Endothelial cell of umbilical vein (primary cell): ENCODE measurements at regions of chr15 and their contacts with region 1.

Region 1: DNA sequence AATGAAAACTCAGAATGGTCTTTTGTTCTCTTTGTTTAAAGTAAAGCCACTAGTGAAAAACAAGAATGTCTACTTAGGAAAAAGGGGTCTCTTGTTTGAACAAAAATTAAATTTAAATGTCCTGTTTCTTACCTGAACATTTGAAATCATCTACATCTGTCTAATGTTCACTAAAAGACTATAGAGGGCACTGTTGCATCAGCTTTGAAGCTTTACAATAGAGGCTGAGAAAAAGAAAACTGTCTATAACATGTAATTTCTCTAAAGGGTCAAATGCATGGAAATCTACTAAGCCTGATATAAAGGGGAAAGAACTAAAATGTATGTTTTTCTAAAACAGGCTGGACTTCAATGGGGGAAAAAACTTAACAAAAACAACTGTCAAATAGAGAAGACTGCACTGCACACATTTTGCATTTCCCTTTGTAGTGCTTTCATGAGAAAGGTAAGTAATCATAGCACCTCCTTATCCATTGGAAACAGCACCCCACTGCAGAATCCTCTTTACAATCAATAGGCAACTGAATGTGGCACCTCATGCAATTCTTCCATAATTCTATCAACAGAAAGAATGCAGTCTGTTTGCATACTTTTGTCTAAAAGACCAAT is 26.3 kb downstream of the DPH6 start:
- DNase-seq: peak; percentile 77
- H3K4me3 ChIP-seq: no peak overlapping the region
- H3K27ac ChIP-seq: no peak overlapping the region
- H3K4me1 ChIP-seq: peaks cover 18% of the 10 kb centered on the region
- H3K27me3 ChIP-seq: no peaks in the 10 kb centered on the region
- CTCF ChIP-seq: peak; percentile 38 to 39
- POLR2A ChIP-seq: no peak

Region 2: GRCh38 chr15:35078221-35078915 is 441.3 kb before region 1 on chr15:
- CTCF ChIA-PET with region 1: interaction called, 10 read pairs
- POLR2A ChIA-PET with region 1: no interaction called
- dilution Hi-C with region 1: no loop called
- intact Hi-C with region 1: loop called (anchors 2 kb)
- DNase-seq: peak; percentile 54
- H3K4me3 ChIP-seq: no peak overlapping the region
- H3K27ac ChIP-seq: no peak overlapping the region
- H3K4me1 ChIP-seq: no peaks in the 10 kb centered on the region
- H3K27me3 ChIP-seq: peaks cover 3 to 4% of the 10 kb centered on the region in 2 experiments
- CTCF ChIP-seq: peak; percentile 72 to 73
- POLR2A ChIP-seq: no peak

Region 3: DNA sequence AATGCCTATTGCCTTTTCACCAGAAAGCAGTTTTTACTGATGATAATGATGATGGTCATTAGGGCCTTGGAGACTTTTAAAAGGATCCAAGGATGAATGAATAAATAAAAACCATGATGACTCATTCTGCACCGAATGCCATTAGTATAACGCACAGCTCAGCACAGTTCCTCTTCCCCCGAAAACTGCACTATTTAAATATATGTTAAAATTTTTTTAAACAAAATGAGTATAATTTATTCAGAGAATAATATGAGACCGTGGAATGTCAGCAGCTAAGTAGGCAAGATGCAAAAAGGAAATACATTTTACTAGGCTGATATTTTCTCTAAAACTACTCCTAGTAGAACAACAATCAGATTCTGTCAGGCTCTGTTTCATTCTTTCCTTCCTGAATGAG is 351.2 kb before region 1 on chr15:
- CTCF ChIA-PET with region 1: no interaction called
- POLR2A ChIA-PET with region 1: no interaction called
- dilution Hi-C with region 1: no loop called
- intact Hi-C with region 1: no loop called
- DNase-seq: peak; percentile 69
- H3K4me3 ChIP-seq: peak overlapping the region in 1 of 3 experiments; percentile 27
- H3K27ac ChIP-seq: peak overlapping the region; percentile 52
- H3K4me1 ChIP-seq: peaks cover 13% of the 10 kb centered on the region
- H3K27me3 ChIP-seq: no peaks in the 10 kb centered on the region
- CTCF ChIP-seq: no peak
- POLR2A ChIP-seq: no peak

Region 4: DNA sequence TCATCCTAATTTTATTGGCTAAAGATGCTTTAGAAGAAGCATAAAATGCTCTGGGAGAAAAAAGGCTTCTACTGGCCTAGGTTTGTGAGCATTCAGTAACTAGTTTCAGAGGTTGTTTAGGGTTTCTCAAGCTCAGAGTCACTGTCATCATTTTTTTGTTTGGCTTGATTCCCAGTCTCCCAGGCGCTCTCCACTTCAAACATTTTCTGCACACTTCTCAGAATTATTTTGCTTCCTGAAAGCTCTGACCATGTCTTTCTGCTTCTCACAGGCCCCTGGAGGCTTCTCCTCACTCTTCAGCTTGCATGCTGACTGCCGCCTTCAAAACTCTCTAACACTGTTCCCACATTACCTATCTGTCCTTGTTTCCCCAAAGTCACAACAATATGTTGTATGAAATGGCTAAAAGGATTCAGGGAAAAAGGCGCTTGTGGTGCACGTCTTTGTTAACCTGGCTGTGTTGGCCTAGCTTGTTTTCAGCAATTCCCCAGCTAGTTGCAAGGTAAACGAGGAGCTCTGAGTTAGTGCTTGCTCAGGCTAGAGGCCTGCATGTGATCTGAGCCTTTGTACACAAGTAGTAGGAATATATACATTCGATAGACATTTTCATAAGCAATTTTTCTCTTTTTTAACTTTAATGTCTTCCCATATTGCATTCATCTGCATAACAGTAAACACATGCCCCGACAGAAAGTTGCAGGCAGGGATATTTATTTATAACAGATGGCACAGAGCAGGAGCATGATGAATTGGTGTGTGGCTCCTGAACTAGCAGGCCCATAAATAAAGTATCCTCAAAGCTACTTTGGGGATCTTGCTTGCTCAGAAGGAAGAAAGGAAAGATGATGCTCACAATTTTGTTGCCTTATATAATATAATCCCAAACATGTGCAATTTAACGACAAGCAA is 155.5 kb after region 1 on chr15:
- CTCF ChIA-PET with region 1: interaction called, 3 read pairs
- POLR2A ChIA-PET with region 1: no interaction called
- dilution Hi-C with region 1: no loop called
- intact Hi-C with region 1: loop called (anchors 1 kb)
- DNase-seq: peak; percentile 62
- H3K4me3 ChIP-seq: no peak overlapping the region
- H3K27ac ChIP-seq: no peak overlapping the region
- H3K4me1 ChIP-seq: peaks cover 46% of the 10 kb centered on the region
- H3K27me3 ChIP-seq: no peaks in the 10 kb centered on the region
- CTCF ChIP-seq: no peak
- POLR2A ChIP-seq: no peak

Region 5: GRCh38 chr15:35751413-35752133 is 231.9 kb after region 1 on chr15:
- CTCF ChIA-PET with region 1: interaction called, 37 read pairs
- POLR2A ChIA-PET with region 1: no interaction called
- dilution Hi-C with region 1: no loop called
- intact Hi-C with region 1: loop called (anchors 2 kb)
- DNase-seq: peak; percentile 85
- H3K4me3 ChIP-seq: no peak overlapping the region
- H3K27ac ChIP-seq: no peak overlapping the region
- H3K4me1 ChIP-seq: peaks cover 3% of the 10 kb centered on the region
- H3K27me3 ChIP-seq: no peaks in the 10 kb centered on the region
- CTCF ChIP-seq: peak; percentile 73 to 77
- POLR2A ChIP-seq: no peak

Region 6: GRCh38 chr15:36501063-36501678 is 981.5 kb after region 1 on chr15:
- CTCF ChIA-PET with region 1: interaction called, 4 read pairs
- POLR2A ChIA-PET with region 1: no interaction called
- dilution Hi-C with region 1: no loop called
- intact Hi-C with region 1: loop called (anchors 1 kb)
- DNase-seq: peak; percentile 69
- H3K4me3 ChIP-seq: no peak overlapping the region
- H3K27ac ChIP-seq: no peak overlapping the region
- H3K4me1 ChIP-seq: peaks cover 4% of the 10 kb centered on the region
- H3K27me3 ChIP-seq: no peaks in the 10 kb centered on the region
- CTCF ChIP-seq: peak; percentile 55 to 64
- POLR2A ChIP-seq: no peak

Region 7: GRCh38 chr15:36883713-36884517 is 1364.3 kb after region 1 on chr15:
- CTCF ChIA-PET with region 1: interaction called, 11 read pairs
- POLR2A ChIA-PET with region 1: no interaction called
- dilution Hi-C with region 1: no loop called
- intact Hi-C with region 1: loop called (anchors 1 kb)
- DNase-seq: peak; percentile 79
- H3K4me3 ChIP-seq: no peak overlapping the region
- H3K27ac ChIP-seq: no peak overlapping the region
- H3K4me1 ChIP-seq: peaks cover 11% of the 10 kb centered on the region
- H3K27me3 ChIP-seq: peaks cover 90 to 99% of the 10 kb centered on the region in 2 experiments
- CTCF ChIP-seq: peak; percentile 72 to 91
- POLR2A ChIP-seq: no peak

Region 8: DNA sequence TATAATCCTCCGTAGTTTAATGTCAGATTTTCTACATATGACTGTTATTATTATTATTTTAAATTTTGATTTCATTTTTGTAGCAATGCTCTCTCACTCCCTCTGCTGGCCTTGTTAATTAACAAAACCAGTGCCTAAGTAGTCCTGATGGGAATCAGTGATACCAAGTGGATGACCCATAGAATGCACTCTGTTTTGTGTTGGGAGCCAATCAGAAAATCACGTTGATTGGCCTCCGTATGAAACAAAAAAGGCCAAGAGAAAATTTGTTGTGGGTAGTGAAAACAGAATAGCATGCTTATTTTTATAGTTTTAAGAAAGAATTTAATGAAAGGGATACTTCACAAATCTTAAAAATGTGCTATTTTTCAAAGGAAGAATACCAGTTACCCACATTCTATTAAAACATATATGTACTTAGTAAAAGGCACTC is 1615.1 kb after region 1 on chr15:
- CTCF ChIA-PET with region 1: interaction called, 6 read pairs
- POLR2A ChIA-PET with region 1: no interaction called
- dilution Hi-C with region 1: no loop called
- intact Hi-C with region 1: loop called (anchors 1 kb)
- DNase-seq: peak; percentile 53
- H3K4me3 ChIP-seq: no peak overlapping the region
- H3K27ac ChIP-seq: no peak overlapping the region
- H3K4me1 ChIP-seq: no peaks in the 10 kb centered on the region
- H3K27me3 ChIP-seq: peaks cover 18 to 33% of the 10 kb centered on the region in 2 experiments
- CTCF ChIP-seq: peak; percentile 42 to 54
- POLR2A ChIP-seq: no peak